ENCODE measurements at regions of chr11 and their contacts with region 1.

Region 1: DNA sequence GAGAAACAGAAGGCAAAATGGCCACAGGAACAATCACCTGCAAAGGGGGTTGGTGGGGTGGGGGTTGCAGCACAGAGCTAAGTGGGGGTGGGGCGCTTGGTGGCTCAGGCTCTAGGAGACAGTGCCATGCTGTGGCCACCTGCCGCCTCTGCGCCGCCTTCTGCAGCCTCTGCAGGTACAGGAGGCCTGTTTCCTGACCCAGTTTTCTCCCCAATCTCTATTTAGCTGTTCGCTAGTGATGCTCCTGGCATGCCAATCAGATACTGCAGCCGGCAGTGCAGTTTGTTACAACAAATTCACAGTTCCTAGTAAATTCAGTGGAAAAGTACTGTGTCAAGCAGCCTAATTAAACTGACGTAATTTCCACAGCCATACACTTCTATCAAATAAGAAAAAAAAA is 106.4 kb downstream of the SERGEF start:
- DNase-seq: peak; percentile 87
- ATAC-seq: peak; percentile 99
- H3K4me3 Mint-ChIP-seq: no peak overlapping the region
- H3K27ac Mint-ChIP-seq: no peak overlapping the region
- H3K4me1 Mint-ChIP-seq: peaks cover 9% of the 10 kb centered on the region
- H3K27me3 Mint-ChIP-seq: no peaks in the 10 kb centered on the region
- CTCF ChIP-seq: no peak

Region 2: GRCh38 chr11:17722000-17722643 is 184.3 kb before region 1 on chr11:
- CTCF ChIA-PET with region 1: interaction called, 15 read pairs
- POLR2A ChIA-PET with region 1: no interaction called
- DNase-seq: peak; percentile 75
- ATAC-seq: peak; percentile 12
- H3K4me3 Mint-ChIP-seq: peak overlapping the region; percentile 58
- H3K27ac Mint-ChIP-seq: no peak overlapping the region
- H3K4me1 Mint-ChIP-seq: peaks cover 11% of the 10 kb centered on the region
- H3K27me3 Mint-ChIP-seq: peaks cover 18% of the 10 kb centered on the region
- CTCF ChIP-seq: no peak

Region 3: DNA sequence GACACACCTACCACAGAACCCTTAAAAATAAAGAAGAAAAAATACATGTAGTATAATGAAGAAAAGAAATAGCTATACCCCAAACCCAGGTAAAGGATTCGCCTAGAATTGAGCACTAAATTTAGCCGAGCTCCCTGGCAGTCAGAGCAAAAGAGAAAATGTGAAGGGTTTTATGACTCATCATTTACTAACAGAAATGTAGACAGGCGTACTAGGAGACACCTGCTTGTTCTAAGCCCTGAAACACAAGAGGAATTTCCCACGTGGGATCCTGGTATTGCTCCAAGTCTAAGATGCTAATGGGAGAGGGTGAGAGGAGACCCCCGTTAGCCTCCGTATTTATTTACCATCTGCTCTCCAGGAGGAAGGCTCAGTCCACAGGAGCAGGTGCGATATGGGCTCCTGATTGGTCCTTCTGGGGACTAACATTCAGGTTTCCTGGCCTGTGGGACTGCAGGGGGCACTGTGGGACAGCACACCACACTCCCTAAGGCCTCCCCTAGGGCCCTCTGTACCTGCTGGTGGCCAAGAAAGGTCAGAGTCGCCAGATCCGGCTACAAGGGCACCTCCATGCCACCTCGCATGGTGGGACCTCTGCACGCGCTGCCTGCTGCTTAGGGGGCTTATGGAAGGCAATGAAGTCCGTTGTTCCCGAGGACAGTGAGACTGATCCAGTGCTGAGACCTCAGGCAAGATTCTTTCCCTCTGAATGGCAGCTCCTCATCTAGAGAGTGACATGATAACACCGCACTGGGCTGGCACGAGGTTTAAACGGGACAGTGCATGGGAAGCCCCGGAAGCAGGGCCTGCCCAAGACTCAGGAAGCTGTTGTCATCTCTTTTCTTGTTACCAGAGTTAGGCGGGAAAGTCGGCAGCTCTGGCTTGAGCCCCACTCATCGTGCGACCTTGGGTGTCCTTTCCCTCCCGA is 146.1 kb before region 1 on chr11:
- CTCF ChIA-PET with region 1: interaction called, 31 read pairs
- POLR2A ChIA-PET with region 1: no interaction called
- DNase-seq: peak; percentile 87
- ATAC-seq: peak; percentile 98
- H3K4me3 Mint-ChIP-seq: no peak overlapping the region
- H3K27ac Mint-ChIP-seq: no peak overlapping the region
- H3K4me1 Mint-ChIP-seq: 0 out of 2 replicates have a peak, but pooled peaks cover 4% of the 10 kb centered on the region
- H3K27me3 Mint-ChIP-seq: no peaks in the 10 kb centered on the region; the same call in 1 of the 2 replicates
- CTCF ChIP-seq: peak; percentile 28; the same call in 1 of the 2 replicates

Region 4: DNA sequence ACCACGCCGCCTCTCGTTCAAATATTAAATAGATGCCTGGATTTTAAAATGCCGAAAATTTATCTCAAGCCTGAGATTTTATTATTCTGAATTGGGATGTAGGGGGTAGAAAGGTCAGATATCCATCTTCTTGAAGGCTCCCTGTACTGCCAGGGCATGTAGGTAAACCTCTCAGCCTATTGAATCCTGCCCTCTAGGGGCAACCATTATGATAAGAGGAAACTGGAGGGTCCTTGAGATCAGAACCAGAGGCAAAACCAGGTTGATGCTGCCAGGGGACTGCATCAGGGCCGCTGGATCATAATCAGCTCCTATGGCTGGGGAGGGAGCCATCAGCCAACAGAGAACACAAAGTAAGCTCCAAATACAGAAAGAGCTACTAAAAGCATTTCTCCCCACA is 79.4 kb before region 1 on chr11:
- CTCF ChIA-PET with region 1: interaction called, 10 read pairs
- POLR2A ChIA-PET with region 1: no interaction called
- DNase-seq: no peak
- ATAC-seq: peak; percentile 92
- H3K4me3 Mint-ChIP-seq: no peak overlapping the region
- H3K27ac Mint-ChIP-seq: no peak overlapping the region
- H3K4me1 Mint-ChIP-seq: peaks cover 8% of the 10 kb centered on the region
- H3K27me3 Mint-ChIP-seq: no peaks in the 10 kb centered on the region; the same call in 1 of the 2 replicates
- CTCF ChIP-seq: no peak

Region 5: GRCh38 chr11:17864478-17864941 is 41.9 kb before region 1 on chr11:
- CTCF ChIA-PET with region 1: interaction called, 19 read pairs
- POLR2A ChIA-PET with region 1: no interaction called
- DNase-seq: peak; percentile 53
- ATAC-seq: peak; percentile 89
- H3K4me3 Mint-ChIP-seq: no peak overlapping the region
- H3K27ac Mint-ChIP-seq: no peak overlapping the region
- H3K4me1 Mint-ChIP-seq: peaks cover 17% of the 10 kb centered on the region
- H3K27me3 Mint-ChIP-seq: no peaks in the 10 kb centered on the region
- CTCF ChIP-seq: peak; percentile 57

Region 6: DNA sequence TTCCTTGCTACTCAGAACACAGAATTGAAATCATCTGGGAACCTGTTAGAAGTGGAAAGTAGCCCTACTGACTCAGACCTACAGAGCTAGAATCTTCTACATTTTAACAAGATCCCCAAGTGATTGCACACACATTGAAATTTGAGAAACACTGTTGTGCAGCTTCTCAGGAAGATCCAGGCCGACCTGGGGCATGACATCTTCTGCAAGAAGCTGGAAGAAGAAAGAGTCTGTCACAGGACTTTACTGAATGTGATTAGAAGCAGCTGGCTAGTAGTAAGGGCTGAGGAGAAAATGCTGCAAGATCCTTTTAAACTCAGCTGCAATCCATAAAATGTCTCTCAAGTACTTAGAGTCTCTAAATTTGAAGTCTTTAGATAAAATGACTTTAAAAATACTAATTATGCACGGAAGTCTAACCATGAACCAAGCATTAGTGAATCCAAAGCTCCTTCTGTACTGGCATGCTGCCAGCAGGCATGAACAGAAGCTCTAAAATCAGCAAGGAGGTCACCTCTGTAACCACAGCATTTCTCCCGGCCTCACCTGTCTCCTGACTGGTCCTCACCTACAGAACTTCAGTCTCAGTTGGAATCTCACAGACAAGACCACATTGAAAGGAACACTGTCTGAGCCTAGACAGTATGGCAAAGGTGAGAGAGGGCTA is 21.4 kb after region 1 on chr11:
- CTCF ChIA-PET with region 1: interaction called, 43 read pairs
- POLR2A ChIA-PET with region 1: no interaction called
- DNase-seq: no peak
- ATAC-seq: no peak
- H3K4me3 Mint-ChIP-seq: no peak overlapping the region
- H3K27ac Mint-ChIP-seq: peak overlapping the region; percentile 30; the same call in 1 of the 2 replicates
- H3K4me1 Mint-ChIP-seq: peaks cover 28% of the 10 kb centered on the region
- H3K27me3 Mint-ChIP-seq: no peaks in the 10 kb centered on the region
- CTCF ChIP-seq: no peak

Region 7: DNA sequence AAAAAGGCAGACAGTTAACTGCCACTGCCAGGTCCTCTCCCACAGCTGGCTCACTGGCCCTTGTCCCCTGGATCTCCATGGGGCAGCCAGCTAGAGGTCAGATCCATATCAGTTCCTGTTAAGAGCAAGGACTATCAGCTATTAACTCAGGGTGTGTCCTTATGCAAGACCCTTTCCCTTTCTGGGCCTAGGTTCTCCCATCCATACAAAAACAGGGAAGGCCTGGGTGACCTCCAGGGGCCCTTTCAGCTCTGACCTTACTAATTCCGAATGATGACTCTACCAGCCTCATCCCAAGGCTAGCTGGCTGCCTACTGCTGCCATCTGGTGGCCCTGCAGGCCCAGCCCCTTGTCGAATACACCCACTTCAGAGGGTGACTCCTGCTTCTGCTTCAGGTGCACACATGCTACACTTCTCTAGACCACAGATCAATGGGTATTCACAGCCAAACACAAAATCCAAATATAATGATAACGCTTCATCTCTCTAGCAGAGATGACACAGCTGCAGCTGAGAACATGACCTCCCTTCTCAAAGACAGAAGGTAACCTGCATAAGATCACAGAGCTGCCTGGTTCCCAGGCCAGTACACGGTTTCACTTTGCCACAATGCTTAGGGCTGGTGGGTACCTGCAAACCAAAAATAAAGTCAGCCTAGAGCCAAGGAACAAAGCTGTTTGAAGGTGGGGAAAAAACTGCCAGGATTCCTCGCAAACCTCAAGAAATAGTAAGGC is 72.3 kb after region 1 on chr11:
- CTCF ChIA-PET with region 1: interaction called, 40 read pairs
- POLR2A ChIA-PET with region 1: no interaction called
- DNase-seq: peak; percentile 73
- ATAC-seq: peak; percentile 97
- H3K4me3 Mint-ChIP-seq: no peak overlapping the region
- H3K27ac Mint-ChIP-seq: 0 out of 2 replicates have a peak overlapping the region, but pooled peaks have one; percentile 86
- H3K4me1 Mint-ChIP-seq: no peaks in the 10 kb centered on the region
- H3K27me3 Mint-ChIP-seq: no peaks in the 10 kb centered on the region
- CTCF ChIP-seq: no peak; the same call in 1 of the 2 replicates

Measured in WTC11 (cell line).